ENCODE measurements at regions of chr15 and their contacts with region 1.

Region 1: GRCh38 chr15:40274350-40275274 is 8.3 kb downstream of the ANKRD63 start:
- DNase-seq: peak; percentile 80
- H3K4me3 Mint-ChIP-seq: no peak overlapping the region
- H3K27ac Mint-ChIP-seq: no peak overlapping the region
- H3K4me1 Mint-ChIP-seq: no peaks in the 10 kb centered on the region
- H3K27me3 Mint-ChIP-seq: no peaks in the 10 kb centered on the region
- CTCF ChIP-seq: peak; percentile 100

Region 2: DNA sequence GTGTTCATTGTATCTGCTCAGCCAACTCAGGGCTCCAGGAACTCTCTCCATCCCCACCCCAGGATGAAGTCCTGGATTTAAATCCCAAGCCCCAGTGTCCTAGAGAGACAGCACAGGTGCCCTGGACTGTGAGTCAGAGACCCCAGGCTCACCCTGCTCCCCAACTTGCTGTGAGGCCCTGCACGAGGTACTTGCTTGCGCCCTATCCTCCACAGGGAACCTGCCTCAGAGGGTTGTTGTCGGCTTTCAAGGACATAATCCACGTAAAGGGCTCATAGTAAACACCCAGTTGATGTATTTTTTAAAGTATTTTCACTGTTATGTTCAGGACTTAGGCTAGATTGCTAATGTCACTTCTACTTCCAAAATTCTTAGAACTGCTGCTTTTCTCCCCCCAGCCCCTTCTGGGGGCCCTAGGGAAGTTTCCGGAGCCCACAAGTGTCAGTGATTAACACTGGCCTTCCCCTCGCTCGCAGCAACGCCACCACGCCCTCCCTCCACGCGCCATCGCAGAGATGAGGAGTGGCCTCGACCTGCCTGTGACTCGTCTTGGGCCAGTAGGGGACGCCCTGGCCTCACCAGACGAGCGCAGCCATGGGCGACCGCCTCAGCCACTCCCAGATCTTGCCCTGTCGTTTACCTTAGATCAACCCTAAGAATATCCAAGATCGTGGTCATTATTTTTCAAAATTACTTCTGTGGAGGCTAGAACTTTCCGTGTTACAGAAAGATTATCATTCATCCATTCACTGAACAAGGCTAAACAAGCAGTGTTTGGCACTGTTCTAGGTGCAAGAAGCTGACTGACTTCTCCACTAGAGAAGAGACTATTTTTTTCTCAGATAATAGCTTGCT is 229.7 kb before region 1 on chr15:
- CTCF ChIA-PET with region 1: interaction called, 39 read pairs
- POLR2A ChIA-PET with region 1: interaction called, 4 read pairs
- intact Hi-C with region 1: loop called (anchors 1 kb)
- DNase-seq: peak; percentile 83
- H3K4me3 Mint-ChIP-seq: peak overlapping the region; percentile 41
- H3K27ac Mint-ChIP-seq: no peak overlapping the region
- H3K4me1 Mint-ChIP-seq: peaks cover 26% of the 10 kb centered on the region
- H3K27me3 Mint-ChIP-seq: no peaks in the 10 kb centered on the region
- CTCF ChIP-seq: peak; percentile 95

Region 3: DNA sequence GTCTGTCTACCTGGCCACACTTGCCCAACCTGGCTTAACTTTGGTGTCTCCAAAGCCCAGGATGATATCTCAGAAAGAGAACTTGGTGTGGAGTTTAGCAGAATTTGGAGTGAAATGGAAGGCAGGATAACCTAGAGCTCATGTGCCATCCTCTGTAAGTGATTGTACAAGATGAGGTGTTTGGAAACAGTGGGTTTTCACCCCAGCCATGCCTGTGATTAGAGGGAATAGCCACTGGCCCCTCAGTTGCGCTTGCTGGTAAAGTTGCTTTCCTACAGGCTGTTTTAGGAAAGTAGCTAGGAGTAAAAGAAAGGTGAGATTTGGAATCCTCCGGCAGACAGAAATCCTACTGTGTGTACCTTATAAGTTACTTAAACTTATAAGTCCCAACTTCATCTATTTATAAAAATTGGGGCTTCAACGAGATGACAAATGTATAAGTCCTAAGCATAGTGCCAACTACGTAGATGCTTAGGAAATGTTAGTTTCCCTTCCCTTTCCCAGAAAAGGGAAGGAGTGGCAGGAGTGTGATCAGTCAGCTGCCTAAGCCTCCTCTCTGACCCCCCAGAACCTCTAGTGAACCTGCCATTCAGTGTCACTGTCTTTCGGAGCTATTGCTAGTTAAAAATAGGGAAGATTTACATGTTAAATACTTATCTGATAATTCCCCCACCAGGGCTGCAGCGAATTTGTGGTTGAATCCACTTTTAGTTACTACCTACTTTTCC is 152.5 kb before region 1 on chr15:
- CTCF ChIA-PET with region 1: no interaction called
- POLR2A ChIA-PET with region 1: no interaction called
- intact Hi-C with region 1: no loop called
- DNase-seq: no peak
- H3K4me3 Mint-ChIP-seq: no peak overlapping the region
- H3K27ac Mint-ChIP-seq: no peak overlapping the region
- H3K4me1 Mint-ChIP-seq: no peaks in the 10 kb centered on the region
- H3K27me3 Mint-ChIP-seq: no peaks in the 10 kb centered on the region
- CTCF ChIP-seq: no peak

Region 4: GRCh38 chr15:40226736-40227135 is 47.9 kb before region 1 on chr15:
- CTCF ChIA-PET with region 1: interaction called, 657 read pairs
- POLR2A ChIA-PET with region 1: no interaction called
- intact Hi-C with region 1: no loop called
- DNase-seq: no peak
- H3K4me3 Mint-ChIP-seq: no peak overlapping the region
- H3K27ac Mint-ChIP-seq: no peak overlapping the region
- H3K4me1 Mint-ChIP-seq: peaks cover 2% of the 10 kb centered on the region
- H3K27me3 Mint-ChIP-seq: no peaks in the 10 kb centered on the region
- CTCF ChIP-seq: no peak

Region 5: GRCh38 chr15:40256638-40257235 is 17.9 kb before region 1 on chr15:
- CTCF ChIA-PET with region 1: interaction called, 35 read pairs
- POLR2A ChIA-PET with region 1: no interaction called
- intact Hi-C with region 1: no loop called
- DNase-seq: no peak
- H3K4me3 Mint-ChIP-seq: no peak overlapping the region
- H3K27ac Mint-ChIP-seq: no peak overlapping the region
- H3K4me1 Mint-ChIP-seq: no peaks in the 10 kb centered on the region
- H3K27me3 Mint-ChIP-seq: no peaks in the 10 kb centered on the region
- CTCF ChIP-seq: no peak

Region 6: GRCh38 chr15:40323239-40323952 is 48.8 kb after region 1 on chr15 and contains the start of gene INAFM2:
- CTCF ChIA-PET with region 1: interaction called, 137 read pairs
- POLR2A ChIA-PET with region 1: no interaction called
- intact Hi-C with region 1: no loop called
- DNase-seq: peak; percentile 89
- H3K4me3 Mint-ChIP-seq: peak within 1 kb of the TSS; percentile 69
- H3K27ac Mint-ChIP-seq: no peak within 1 kb of the TSS
- H3K4me1 Mint-ChIP-seq: peaks cover 30% of the 10 kb centered on the region
- H3K27me3 Mint-ChIP-seq: no peaks in the 10 kb centered on the region
- CTCF ChIP-seq: peak; percentile 32
- total RNA-seq, gene INAFM2: 14.9 and 15.7 TPM in 2 replicates

Region 7: DNA sequence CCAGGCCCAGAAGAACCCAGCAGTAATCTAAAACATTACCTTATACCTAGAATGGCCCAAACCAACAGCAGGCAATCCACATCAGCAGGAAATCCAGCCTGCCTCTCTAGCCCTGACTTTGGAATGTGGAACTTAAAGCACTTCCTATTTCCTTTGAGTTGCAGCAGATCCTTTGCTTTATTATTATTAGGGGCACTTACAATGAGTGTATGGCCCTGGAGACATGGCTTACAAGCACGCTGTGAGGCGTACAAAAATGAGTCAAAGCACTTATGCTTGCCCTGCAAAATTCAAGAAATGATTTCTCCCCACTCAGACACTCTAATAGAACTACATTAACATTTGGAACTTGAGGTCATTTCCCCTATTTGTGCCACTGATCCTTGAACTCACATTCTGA is 98.4 kb after region 1 on chr15:
- CTCF ChIA-PET with region 1: interaction called, 40 read pairs
- POLR2A ChIA-PET with region 1: interaction called, 3 read pairs
- intact Hi-C with region 1: loop called (anchors 1 kb)
- DNase-seq: no peak
- H3K4me3 Mint-ChIP-seq: no peak overlapping the region
- H3K27ac Mint-ChIP-seq: no peak overlapping the region
- H3K4me1 Mint-ChIP-seq: no peaks in the 10 kb centered on the region
- H3K27me3 Mint-ChIP-seq: no peaks in the 10 kb centered on the region
- CTCF ChIP-seq: no peak

Region 8: GRCh38 chr15:40466426-40467244 is 192.0 kb after region 1 on chr15:
- CTCF ChIA-PET with region 1: no interaction called
- POLR2A ChIA-PET with region 1: no interaction called
- intact Hi-C with region 1: no loop called
- DNase-seq: no peak
- H3K4me3 Mint-ChIP-seq: no peak overlapping the region
- H3K27ac Mint-ChIP-seq: peak overlapping the region; percentile 59
- H3K4me1 Mint-ChIP-seq: no peaks in the 10 kb centered on the region
- H3K27me3 Mint-ChIP-seq: no peaks in the 10 kb centered on the region
- CTCF ChIP-seq: no peak

Region 9: DNA sequence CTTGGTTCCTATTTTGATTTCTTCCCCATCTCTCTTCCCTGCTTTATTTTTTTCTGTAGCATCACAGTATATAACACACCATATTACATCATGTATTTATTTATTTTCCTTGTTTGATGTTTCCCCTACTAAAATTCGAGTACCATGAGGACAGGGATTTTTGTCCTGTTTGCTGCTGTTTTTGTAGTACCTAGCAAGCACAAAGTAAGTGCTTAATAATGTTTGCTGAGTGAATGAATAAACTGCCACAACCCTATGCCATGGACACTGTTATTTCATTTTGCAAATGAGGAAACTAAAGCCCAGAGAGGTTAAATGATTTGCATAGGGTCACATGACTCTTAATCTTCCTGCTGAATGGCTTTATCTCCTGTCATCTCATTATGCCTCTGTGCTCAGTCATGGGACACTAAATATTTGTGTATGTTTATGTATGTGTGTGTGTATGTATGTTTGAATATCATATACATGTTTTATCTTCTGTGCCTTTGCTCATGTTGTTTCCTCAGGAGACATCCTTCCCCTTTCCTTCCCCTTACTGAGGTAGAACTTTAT is 1359.5 kb after region 1 on chr15:
- CTCF ChIA-PET with region 1: no interaction called
- POLR2A ChIA-PET with region 1: no interaction called
- intact Hi-C with region 1: no loop called
- DNase-seq: no peak
- H3K4me3 Mint-ChIP-seq: no peak overlapping the region
- H3K27ac Mint-ChIP-seq: no peak overlapping the region
- H3K4me1 Mint-ChIP-seq: peaks cover 5% of the 10 kb centered on the region
- H3K27me3 Mint-ChIP-seq: no peaks in the 10 kb centered on the region
- CTCF ChIP-seq: no peak

Measured in MCF 10A (cell line).